AG04450 (cell line): ENCODE measurements at regions of chr1 and their contacts with region 1.

Region 1: DNA sequence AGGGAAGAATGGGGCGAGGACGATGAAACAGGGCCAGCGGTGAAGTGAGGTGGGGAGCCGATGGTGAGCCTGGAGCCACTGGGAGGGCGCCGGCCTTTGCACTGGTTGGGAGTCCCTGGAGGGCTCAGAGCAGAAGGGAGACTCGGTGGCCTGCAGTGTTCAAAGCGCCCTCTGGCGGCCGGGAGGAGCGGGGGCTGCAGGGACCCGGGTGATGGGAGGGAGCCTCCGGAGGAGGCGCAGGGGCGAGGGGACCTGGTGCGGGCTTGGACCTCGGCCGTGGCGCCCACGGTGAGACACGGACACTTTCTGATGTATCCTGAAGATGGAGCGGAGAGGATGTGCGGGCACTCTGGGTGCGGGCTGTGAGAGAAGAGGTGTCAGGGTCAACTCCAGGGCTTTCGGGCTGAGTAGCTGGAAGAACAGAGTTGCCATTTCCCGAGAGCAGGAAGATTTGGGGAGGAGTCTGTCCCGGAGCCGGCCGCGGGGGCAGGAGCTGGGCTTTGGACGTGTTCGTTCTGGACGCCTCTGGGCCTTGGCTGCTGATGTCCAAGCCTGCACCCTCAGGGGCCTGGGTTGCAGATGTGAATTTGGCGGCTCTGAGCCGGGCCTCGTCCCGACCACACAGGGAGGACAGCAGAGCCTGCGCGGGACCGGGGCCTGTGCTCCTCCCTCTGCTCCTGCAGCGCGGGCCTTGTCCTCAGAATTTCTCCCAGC is 29.7 kb downstream of the HEYL start:
- DNase-seq: no peak
- H3K4me3 ChIP-seq: no peak overlapping the region
- H3K27ac ChIP-seq: no peak overlapping the region
- H3K27me3 ChIP-seq: no peaks in the 10 kb centered on the region
- CTCF ChIP-seq: peak; percentile 59

Region 2: GRCh38 chr1:39596163-39596562 is 13.6 kb before region 1 on chr1:
- CTCF ChIA-PET with region 1: interaction called, 17 read pairs
- POLR2A ChIA-PET with region 1: no interaction called
- DNase-seq: no peak
- H3K4me3 ChIP-seq: no peak overlapping the region
- H3K27ac ChIP-seq: no peak overlapping the region
- H3K27me3 ChIP-seq: peaks cover 38% of the 10 kb centered on the region
- CTCF ChIP-seq: no peak

Region 3: DNA sequence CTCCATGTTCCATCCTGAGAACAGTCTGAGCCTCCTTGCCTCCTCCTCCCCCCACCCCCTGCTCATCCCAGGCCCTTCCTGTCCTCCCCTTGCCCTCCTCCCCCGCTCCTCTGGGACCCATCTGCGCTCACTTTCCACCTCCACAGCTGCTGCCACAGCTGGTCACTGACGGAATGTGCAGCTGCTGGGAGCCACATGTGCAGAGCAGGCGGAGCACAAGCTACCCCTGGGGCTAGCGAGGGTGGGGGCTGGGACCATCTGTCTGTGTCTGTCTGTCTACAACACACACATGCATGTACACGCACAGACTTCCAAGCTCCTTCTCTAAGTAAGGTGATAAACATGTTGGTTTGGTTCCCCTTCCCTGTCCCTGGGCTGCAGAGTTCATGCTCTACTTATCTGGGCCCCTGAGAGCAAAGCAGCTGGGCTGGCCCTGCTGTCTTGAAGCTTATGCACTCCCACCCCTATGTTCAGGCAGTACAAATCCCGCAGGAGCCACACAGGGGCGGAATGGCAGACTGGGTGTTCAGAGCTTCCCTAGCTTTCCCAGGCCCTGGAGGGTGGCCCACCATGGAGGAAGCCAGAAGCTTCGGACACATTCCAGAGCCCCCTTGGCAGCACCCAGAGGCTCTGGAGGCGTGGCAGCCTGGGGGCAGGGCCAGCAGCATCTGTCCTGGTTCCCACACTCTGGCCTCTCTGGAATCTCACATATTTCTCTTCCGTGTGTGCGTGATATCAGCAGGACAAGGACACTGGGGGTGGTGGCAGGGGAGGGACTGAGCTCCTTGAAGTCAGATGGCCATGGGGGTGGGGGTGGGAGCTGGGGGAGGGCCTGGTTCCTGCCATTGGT is 36.7 kb after region 1 on chr1:
- CTCF ChIA-PET with region 1: interaction called, 71 read pairs
- POLR2A ChIA-PET with region 1: no interaction called
- DNase-seq: peak; percentile 48
- H3K4me3 ChIP-seq: no peak overlapping the region
- H3K27ac ChIP-seq: peak overlapping the region; percentile 73
- H3K27me3 ChIP-seq: peaks cover 12% of the 10 kb centered on the region
- CTCF ChIP-seq: no peak

Region 4: GRCh38 chr1:39672551-39672947 is 62.8 kb after region 1 on chr1:
- CTCF ChIA-PET with region 1: interaction called, 40 read pairs
- POLR2A ChIA-PET with region 1: no interaction called
- DNase-seq: no peak
- H3K4me3 ChIP-seq: peak overlapping the region; percentile 45; the same call in 1 of the 2 replicates
- H3K27ac ChIP-seq: no peak overlapping the region
- H3K27me3 ChIP-seq: peaks cover 74% of the 10 kb centered on the region
- CTCF ChIP-seq: peak; percentile 56

Region 5: GRCh38 chr1:39726600-39726999 is 116.8 kb after region 1 on chr1:
- CTCF ChIA-PET with region 1: interaction called, 13 read pairs
- POLR2A ChIA-PET with region 1: no interaction called
- DNase-seq: no peak
- H3K4me3 ChIP-seq: no peak overlapping the region
- H3K27ac ChIP-seq: no peak overlapping the region
- H3K27me3 ChIP-seq: peaks cover 34% of the 10 kb centered on the region
- CTCF ChIP-seq: no peak